SK-N-SH (cell line): ENCODE measurements at regions of chr2 and their contacts with region 1.

Region 1: DNA sequence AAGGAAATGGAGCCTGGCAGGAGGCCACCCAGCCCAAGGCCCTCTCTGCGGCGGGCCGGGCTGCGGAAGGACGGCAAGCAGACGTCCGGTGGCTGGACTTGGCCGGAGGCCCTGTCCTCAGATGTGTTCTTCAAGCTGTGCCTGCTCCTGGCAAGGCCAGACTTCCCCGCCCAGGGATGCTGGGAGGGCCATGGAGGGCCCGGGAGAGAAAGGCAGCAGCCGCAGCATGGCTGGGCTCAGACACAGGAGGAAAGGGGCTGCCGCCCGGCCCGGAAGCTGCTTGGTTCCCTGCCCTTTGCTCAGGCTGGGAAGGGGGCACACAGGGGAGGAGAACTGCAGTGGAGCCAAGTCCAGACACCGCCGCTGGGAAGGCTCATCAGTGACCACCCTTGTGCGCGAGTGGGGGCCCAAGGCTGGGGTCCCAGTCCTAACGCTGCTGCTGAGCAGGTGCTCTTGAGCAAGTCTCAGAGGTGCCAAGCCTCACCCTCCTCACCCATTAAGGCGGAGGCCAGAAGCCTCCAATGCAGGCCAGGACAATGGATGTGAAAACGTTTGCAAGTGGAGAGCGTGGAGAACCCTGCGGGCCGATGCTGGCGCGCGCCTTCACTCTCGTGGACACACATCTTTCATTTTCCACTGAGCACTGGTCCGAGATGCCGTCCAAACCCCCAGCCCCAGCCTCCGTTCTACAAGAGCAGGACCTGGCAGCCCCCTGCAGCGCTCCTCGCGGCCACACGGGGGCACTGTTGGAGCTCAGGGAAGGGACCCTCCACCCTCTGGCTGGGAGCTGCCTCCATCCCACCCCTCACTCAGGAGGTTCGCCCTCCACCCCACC is 7.9 kb downstream of the CROCC2 start:
- DNase-seq: peak; percentile 94
- H3K4me3 ChIP-seq: peak overlapping the region in 1 of 2 experiments; percentile 40; a peak in 1 of 4 replicates
- H3K27ac ChIP-seq: no peak overlapping the region; a peak in 1 of 4 replicates
- H3K4me1 ChIP-seq: peaks cover 3 to 52% of the 10 kb centered on the region in 2 experiments; a peak in 1 of 4 replicates
- H3K27me3 ChIP-seq: no peaks in the 10 kb centered on the region
- CTCF ChIP-seq: peak; percentile 93
- EP300 ChIP-seq: no peak
- RAD21 ChIP-seq: peak; percentile 82

Region 2: GRCh38 chr2:240926516-240927389 is 12.7 kb after region 1 on chr2:
- CTCF ChIA-PET with region 1: interaction called, 25 read pairs
- POLR2A ChIA-PET with region 1: no interaction called
- DNase-seq: peak; percentile 69
- H3K4me3 ChIP-seq: no peak overlapping the region
- H3K27ac ChIP-seq: no peak overlapping the region
- H3K4me1 ChIP-seq: peaks cover under 1 to 10% of the 10 kb centered on the region in 2 experiments; a peak in 2 of 4 replicates
- H3K27me3 ChIP-seq: no peaks in the 10 kb centered on the region; the same call in 1 of the 2 replicates
- CTCF ChIP-seq: no peak
- EP300 ChIP-seq: no peak
- RAD21 ChIP-seq: no peak

Region 3: DNA sequence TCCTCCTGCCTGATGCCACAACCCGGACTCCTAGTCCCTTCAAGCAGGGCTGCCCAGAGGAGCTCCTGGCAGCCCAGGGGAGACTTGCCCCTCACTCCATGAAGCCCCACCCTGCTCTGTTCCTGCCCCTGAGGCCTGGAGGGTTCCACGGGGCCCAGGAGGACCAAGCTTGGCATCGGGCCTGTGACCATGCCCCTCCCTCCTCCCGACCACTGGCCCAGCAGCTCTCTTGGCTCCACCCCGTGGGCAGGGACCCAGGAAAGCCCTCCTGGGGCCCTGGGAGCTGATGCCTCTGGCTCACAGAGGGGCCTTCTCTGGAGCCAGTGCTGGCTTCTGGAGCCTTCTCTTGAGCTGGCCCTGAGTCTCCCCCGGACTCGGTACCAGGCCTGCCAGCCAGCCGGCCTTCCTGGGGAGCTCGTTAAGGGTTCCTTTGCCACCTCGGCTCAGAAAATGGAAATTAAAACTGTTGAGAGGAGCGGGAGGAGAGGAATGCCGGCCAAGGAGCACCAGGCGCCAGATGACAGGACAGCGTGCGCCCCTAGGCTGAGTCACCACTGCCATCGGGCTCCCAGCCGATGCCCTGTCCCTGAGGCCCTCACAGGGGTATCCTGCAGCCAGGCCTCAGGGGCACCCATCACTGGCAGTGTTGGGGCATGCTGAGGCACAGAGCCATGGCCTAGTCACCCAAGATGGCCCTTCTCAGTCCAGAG is 43.8 kb after region 1 on chr2:
- CTCF ChIA-PET with region 1: interaction called, 12 read pairs
- POLR2A ChIA-PET with region 1: interaction called, 3 read pairs
- DNase-seq: peak; percentile 79
- H3K4me3 ChIP-seq: no peak overlapping the region
- H3K27ac ChIP-seq: no peak overlapping the region; a peak in 1 of 4 replicates
- H3K4me1 ChIP-seq: peaks cover 0 to 74% of the 10 kb centered on the region in 2 experiments; a peak in 1 of 4 replicates
- H3K27me3 ChIP-seq: no peaks in the 10 kb centered on the region
- CTCF ChIP-seq: no peak
- EP300 ChIP-seq: no peak
- RAD21 ChIP-seq: no peak

Region 4: DNA sequence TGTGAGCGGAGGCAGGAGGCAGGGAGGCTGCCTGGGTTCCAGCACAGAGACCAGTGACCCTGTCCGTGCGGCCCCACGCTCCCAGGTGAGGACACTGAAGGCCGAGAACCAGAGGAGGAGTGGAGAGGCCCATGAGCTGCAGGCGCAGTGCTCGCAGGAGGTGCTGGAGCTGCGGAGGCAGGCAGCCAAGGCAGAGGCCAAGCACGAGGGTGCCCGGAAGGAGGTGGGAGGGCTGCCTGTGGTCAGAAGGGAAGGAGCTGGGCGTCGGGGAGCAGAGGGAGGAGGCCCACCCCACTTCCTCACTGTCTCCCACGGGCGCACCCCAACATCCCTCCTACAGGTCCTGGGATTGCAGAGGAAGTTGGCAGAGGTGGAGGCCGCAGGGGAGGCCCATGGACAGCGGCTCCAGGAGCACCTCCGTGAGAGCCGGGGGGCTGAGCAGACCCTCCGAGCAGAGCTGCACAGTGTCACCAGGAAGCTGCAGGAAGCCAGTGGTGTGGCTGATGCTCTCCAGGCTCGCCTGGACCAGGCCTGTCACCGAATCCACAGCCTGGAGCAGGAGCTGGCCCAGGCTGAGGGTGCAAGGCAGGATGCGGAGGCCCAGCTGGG is 51.4 kb after region 1 on chr2:
- CTCF ChIA-PET with region 1: interaction called, 11 read pairs
- POLR2A ChIA-PET with region 1: no interaction called
- DNase-seq: peak; percentile 44
- H3K4me3 ChIP-seq: no peak overlapping the region
- H3K27ac ChIP-seq: no peak overlapping the region
- H3K4me1 ChIP-seq: peaks cover 0 to 23% of the 10 kb centered on the region in 2 experiments; a peak in 1 of 4 replicates
- H3K27me3 ChIP-seq: no peaks in the 10 kb centered on the region
- CTCF ChIP-seq: no peak
- EP300 ChIP-seq: no peak
- RAD21 ChIP-seq: no peak

Region 5: DNA sequence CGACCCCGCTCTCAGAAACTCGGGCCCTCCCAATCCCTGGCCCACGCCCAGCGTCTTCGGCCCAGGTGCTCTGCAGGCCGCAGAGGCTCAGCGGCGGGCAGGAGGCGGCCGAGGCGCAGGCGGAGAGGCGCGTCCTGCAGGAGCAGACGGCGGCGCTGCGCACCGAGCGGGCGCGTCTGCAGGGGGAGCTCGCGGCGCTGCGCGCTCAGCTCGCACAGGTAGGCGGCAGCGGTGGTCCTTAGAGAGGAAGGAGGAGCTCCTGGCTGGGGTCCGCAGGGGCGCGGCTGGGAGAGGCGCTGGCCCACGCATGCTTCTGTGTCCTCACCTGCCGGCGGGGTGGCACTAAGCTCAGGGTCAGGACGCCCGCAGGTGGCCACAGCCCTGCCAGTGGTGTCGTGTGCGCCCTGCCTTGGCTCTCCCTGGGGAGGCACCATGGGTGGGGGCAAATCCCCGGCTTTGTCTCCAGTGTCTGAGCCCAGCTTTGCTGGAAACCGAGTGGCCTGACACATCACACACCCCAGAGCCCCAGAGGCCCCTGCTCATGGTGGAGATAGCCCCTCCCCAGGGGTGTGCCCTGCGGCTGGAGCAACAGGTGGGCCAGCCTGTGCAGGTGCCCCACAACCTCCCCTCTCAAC is 69.5 kb after region 1 on chr2:
- CTCF ChIA-PET with region 1: interaction called, 15 read pairs
- POLR2A ChIA-PET with region 1: no interaction called
- DNase-seq: peak; percentile 76
- H3K4me3 ChIP-seq: no peak overlapping the region
- H3K27ac ChIP-seq: no peak overlapping the region
- H3K4me1 ChIP-seq: peaks cover 0 to 5% of the 10 kb centered on the region in 2 experiments; a peak in 2 of 4 replicates
- H3K27me3 ChIP-seq: no peaks in the 10 kb centered on the region
- CTCF ChIP-seq: peak; percentile 35
- EP300 ChIP-seq: no peak
- RAD21 ChIP-seq: peak; percentile 41; the same call in 1 of the 2 replicates